Right ventricle myocardium inferior (tissue), 1 donor: ENCODE measurements at regions of chr17 and their contacts with region 1.

Region 1: GRCh38 chr17:63445979-63446691 is at the start of gene CYB561:
- DNase-seq: peak; percentile 86
- ATAC-seq: peak; percentile 84
- total RNA-seq, gene CYB561: 15.5 TPM

Region 2: DNA sequence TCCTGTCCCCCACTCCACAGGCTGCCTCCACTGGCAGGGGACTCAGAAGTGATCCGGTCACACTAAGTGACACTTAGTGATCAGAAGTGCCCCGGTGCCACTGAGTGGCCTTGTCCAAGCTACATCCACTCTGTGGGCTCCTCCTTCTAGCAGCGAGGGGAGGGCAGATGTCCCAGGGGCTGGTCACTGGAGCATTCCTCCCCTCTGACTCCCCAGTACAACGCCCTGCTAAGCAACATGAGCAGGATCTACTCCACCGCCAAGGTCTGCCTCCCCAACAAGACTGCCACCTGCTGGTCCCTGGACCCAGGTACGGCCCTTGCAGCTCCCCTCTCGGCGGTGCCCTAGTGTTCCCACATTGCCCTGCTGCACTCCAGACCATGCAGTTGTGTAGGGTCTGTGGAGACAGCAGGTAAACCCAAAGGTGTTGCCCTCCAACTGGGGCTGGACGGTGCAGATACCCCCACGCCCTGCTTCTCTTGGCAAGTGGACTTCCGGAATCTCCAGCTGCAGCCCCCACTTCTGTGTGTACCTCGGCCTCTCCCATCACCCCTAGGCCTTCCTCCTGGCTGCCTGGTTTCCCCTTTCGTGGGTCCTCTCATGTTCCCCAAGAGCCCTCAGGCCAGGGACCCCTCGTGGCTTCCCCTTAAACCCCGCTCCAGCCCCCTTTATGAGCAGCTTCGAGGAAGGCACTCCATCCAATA is 32.8 kb after region 1 on chr17:
- intact Hi-C with region 1: loop called (anchors 2 kb)
- DNase-seq: peak; percentile 85
- ATAC-seq: peak; percentile 84